GM10248 (cell line): ENCODE measurements at regions of chr6 and their contacts with region 1.

Region 1: GRCh38 chr6:17700421-17701416 is 6.0 kb downstream of the NUP153 start:
- DNase-seq: no peak
- CTCF ChIP-seq: no peak

Region 2: GRCh38 chr6:17688481-17688880 is 12.2 kb before region 1 on chr6:
- CTCF ChIA-PET with region 1: interaction called, 60 read pairs
- POLR2A ChIA-PET with region 1: interaction called, 4 read pairs
- DNase-seq: no peak
- CTCF ChIP-seq: no peak